BJ (cell line): ENCODE measurements at regions of chr4 and their contacts with region 1.

Region 1: GRCh38 chr4:158739600-158739999 is 16.4 kb upstream of the PPID start:
- DNase-seq: no peak
- H3K4me3 ChIP-seq: no peak overlapping the region
- H3K27me3 ChIP-seq: no peaks in the 10 kb centered on the region
- CTCF ChIP-seq: no peak

Region 2: DNA sequence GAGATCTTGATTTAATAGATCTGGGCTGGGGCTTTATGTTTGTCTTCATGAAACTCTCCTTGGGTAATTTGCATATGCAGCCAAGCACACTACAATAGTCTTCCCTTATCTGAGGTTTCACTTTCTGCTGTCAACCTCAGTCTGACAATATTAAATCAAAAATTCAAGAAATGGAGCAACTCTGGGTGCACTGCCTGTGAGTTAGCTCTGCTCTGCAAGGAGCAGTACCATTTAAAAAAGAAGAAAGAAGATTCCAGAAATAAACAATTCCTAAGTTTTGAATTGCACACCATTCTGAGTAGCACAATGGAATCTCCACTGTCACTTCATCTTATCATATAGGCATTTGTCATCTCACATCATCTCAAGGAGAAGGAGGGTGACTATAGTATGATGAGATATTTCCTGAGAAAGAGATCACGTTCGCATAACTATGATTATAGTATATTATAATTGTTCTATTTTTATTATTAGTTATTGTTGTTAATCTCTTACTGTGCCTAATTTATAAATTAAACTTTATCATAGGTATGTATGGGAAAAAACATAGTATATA is 38.6 kb after region 1 on chr4:
- CTCF ChIA-PET with region 1: interaction called, 5 read pairs
- POLR2A ChIA-PET with region 1: interaction called, 14 read pairs
- DNase-seq: no peak
- H3K4me3 ChIP-seq: no peak overlapping the region
- H3K27me3 ChIP-seq: no peaks in the 10 kb centered on the region
- CTCF ChIP-seq: no peak